A673 (cell line): ENCODE measurements at regions of chr17 and their contacts with region 1.

Region 1: GRCh38 chr17:77471984-77472461 is 331.3 kb downstream of the SEC14L1 start:
- DNase-seq: peak; percentile 93
- H3K4me3 ChIP-seq: peak overlapping the region; percentile 34
- H3K27ac ChIP-seq: peak overlapping the region; percentile 99
- H3K4me1 ChIP-seq: peaks cover 66% of the 10 kb centered on the region
- H3K27me3 ChIP-seq: no peaks in the 10 kb centered on the region
- CTCF ChIP-seq: no peak

Region 2: DNA sequence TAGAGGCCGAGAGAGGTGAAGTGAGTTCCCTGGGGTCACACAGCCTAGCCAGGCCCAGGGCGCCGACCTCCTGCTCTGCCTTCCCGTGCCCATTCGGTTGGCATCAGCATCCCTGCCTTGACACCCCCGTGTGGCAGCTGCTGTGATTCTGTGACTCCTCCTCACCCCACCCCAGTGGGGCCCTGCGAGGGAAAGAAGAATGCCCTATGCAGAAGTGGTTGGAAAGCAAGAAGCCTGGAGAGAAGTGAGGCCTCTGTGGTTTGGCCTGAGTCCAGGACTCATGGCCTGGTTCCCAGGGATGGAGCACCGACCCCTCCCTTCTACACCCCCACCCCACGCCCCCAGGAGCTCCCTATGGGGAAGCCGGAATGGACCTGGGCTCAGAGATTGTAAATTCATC is 35.0 kb before region 1 on chr17:
- CTCF ChIA-PET with region 1: no interaction called
- POLR2A ChIA-PET with region 1: no interaction called
- intact Hi-C with region 1: loop called (anchors 5 kb)
- DNase-seq: peak; percentile 62
- H3K4me3 ChIP-seq: no peak overlapping the region
- H3K27ac ChIP-seq: peak overlapping the region; percentile 58
- H3K4me1 ChIP-seq: peaks cover 87% of the 10 kb centered on the region
- H3K27me3 ChIP-seq: no peaks in the 10 kb centered on the region
- CTCF ChIP-seq: no peak